ENCODE measurements at regions of chr2 and their contacts with region 1.

Region 1: GRCh38 chr2:191051825-191052778 is 38.1 kb upstream of the STAT1 start:
- DNase-seq: peak; percentile 43
- ATAC-seq: peak; percentile 46
- H3K4me3 Mint-ChIP-seq: no peak overlapping the region
- H3K27ac Mint-ChIP-seq: no peak overlapping the region
- H3K4me1 Mint-ChIP-seq: peaks cover 23% of the 10 kb centered on the region
- H3K27me3 Mint-ChIP-seq: no peaks in the 10 kb centered on the region

Region 2: GRCh38 chr2:190911813-190912212 is 140.3 kb before region 1 on chr2:
- CTCF ChIA-PET with region 1: no interaction called
- POLR2A ChIA-PET with region 1: no interaction called
- DNase-seq: no peak
- ATAC-seq: peak; percentile 50
- H3K4me3 Mint-ChIP-seq: no peak overlapping the region
- H3K27ac Mint-ChIP-seq: no peak overlapping the region
- H3K4me1 Mint-ChIP-seq: peaks cover 27% of the 10 kb centered on the region
- H3K27me3 Mint-ChIP-seq: no peaks in the 10 kb centered on the region

Region 3: DNA sequence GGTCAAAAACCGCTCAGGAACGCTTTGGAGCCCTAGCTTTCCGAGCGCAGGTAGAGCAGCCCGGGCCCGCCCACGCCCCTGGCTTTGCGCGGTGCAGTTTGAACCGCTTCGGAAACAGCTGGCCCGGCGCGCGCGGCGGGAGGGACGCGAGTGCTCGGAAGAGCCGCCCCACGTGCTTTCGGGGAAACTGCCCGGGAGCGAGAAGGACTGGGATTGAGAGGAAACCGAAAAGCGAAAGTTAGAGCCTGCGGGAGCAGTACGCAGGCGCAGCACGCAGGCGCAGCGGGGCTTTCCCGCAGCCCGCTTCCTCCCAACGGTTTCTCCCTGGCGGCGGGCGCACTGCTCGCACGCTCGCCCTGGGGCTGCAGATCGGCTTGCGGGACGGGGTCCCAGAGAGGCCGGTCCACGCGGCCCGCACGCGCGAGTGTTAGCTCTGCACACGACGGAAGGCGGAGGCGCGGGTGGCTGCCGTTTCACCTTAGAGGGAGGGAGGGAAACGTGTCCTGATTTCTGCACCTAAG is 31.8 kb before region 1 on chr2:
- CTCF ChIA-PET with region 1: interaction called, 21 read pairs
- POLR2A ChIA-PET with region 1: interaction called, 5 read pairs
- DNase-seq: peak; percentile 94
- ATAC-seq: peak; percentile 75
- H3K4me3 Mint-ChIP-seq: no peak overlapping the region
- H3K27ac Mint-ChIP-seq: no peak overlapping the region
- H3K4me1 Mint-ChIP-seq: peaks cover 38% of the 10 kb centered on the region
- H3K27me3 Mint-ChIP-seq: no peaks in the 10 kb centered on the region

Region 4: GRCh38 chr2:191066197-191066918 is 14.3 kb after region 1 on chr2:
- CTCF ChIA-PET with region 1: interaction called, 121 read pairs
- POLR2A ChIA-PET with region 1: interaction called, 13 read pairs
- DNase-seq: peak; percentile 41
- ATAC-seq: peak; percentile 37
- H3K4me3 Mint-ChIP-seq: peak overlapping the region; percentile 72
- H3K27ac Mint-ChIP-seq: peak overlapping the region; percentile 85
- H3K4me1 Mint-ChIP-seq: peaks cover 70% of the 10 kb centered on the region
- H3K27me3 Mint-ChIP-seq: no peaks in the 10 kb centered on the region

Region 5: GRCh38 chr2:191128172-191128910 is 76.2 kb after region 1 on chr2:
- CTCF ChIA-PET with region 1: interaction called, 37 read pairs
- POLR2A ChIA-PET with region 1: interaction called, 5 read pairs
- DNase-seq: peak; percentile 44
- ATAC-seq: peak; percentile 88
- H3K4me3 Mint-ChIP-seq: peak overlapping the region; percentile 66
- H3K27ac Mint-ChIP-seq: peak overlapping the region; percentile 91
- H3K4me1 Mint-ChIP-seq: peaks cover 77% of the 10 kb centered on the region
- H3K27me3 Mint-ChIP-seq: no peaks in the 10 kb centered on the region

Region 6: GRCh38 chr2:191171708-191172355 is 119.7 kb after region 1 on chr2:
- CTCF ChIA-PET with region 1: interaction called, 1,116 read pairs
- POLR2A ChIA-PET with region 1: interaction called, 4 read pairs
- DNase-seq: no peak
- ATAC-seq: no peak
- H3K4me3 Mint-ChIP-seq: no peak overlapping the region
- H3K27ac Mint-ChIP-seq: no peak overlapping the region
- H3K4me1 Mint-ChIP-seq: peaks cover 59% of the 10 kb centered on the region
- H3K27me3 Mint-ChIP-seq: no peaks in the 10 kb centered on the region